ENCODE measurements at regions of chr11 and their contacts with region 1.

Region 1: GRCh38 chr11:86938900-86939880 is 16.0 kb downstream of the FZD4 start:
- DNase-seq: no peak
- H3K4me3 ChIP-seq: peak overlapping the region; percentile 52
- H3K27ac ChIP-seq: peak overlapping the region; percentile 90
- H3K4me1 ChIP-seq: peaks cover 78% of the 10 kb centered on the region
- H3K27me3 ChIP-seq: no peaks in the 10 kb centered on the region
- CTCF ChIP-seq: peak; percentile 79

Region 2: GRCh38 chr11:86990515-86990914 is 51.3 kb after region 1 on chr11:
- intact Hi-C with region 1: no loop called
- DNase-seq: no peak
- H3K4me3 ChIP-seq: no peak overlapping the region
- H3K27ac ChIP-seq: no peak overlapping the region
- H3K4me1 ChIP-seq: peaks cover 23% of the 10 kb centered on the region
- H3K27me3 ChIP-seq: no peaks in the 10 kb centered on the region
- CTCF ChIP-seq: no peak

Region 3: GRCh38 chr11:87281496-87281895 is 342.3 kb after region 1 on chr11:
- intact Hi-C with region 1: loop called (anchors 5 kb)
- DNase-seq: no peak
- H3K4me3 ChIP-seq: no peak overlapping the region
- H3K27ac ChIP-seq: peak overlapping the region; percentile 34
- H3K4me1 ChIP-seq: peaks cover 20% of the 10 kb centered on the region
- H3K27me3 ChIP-seq: no peaks in the 10 kb centered on the region
- CTCF ChIP-seq: peak; percentile 53